ENCODE measurements at regions of chr1 and their contacts with region 1.

Region 1: GRCh38 chr1:244047621-244048471 is 3.2 kb upstream of the ZBTB18 start:
- DNase-seq: peak; percentile 100
- H3K4me3 ChIP-seq: peak overlapping the region; percentile 76 to 90 (median 84)
- H3K27ac ChIP-seq: peak overlapping the region; percentile 95 to 98 (median 96)
- H3K4me1 ChIP-seq: peaks cover 0 to 40% (median 25%) of the 10 kb centered on the region in 4 donors
- H3K27me3 ChIP-seq: no peaks in the 10 kb centered on the region
- CTCF ChIP-seq: no peak
- EP300 ChIP-seq: no peak
- POLR2A ChIP-seq: peak; percentile 96 to 98

Region 2: DNA sequence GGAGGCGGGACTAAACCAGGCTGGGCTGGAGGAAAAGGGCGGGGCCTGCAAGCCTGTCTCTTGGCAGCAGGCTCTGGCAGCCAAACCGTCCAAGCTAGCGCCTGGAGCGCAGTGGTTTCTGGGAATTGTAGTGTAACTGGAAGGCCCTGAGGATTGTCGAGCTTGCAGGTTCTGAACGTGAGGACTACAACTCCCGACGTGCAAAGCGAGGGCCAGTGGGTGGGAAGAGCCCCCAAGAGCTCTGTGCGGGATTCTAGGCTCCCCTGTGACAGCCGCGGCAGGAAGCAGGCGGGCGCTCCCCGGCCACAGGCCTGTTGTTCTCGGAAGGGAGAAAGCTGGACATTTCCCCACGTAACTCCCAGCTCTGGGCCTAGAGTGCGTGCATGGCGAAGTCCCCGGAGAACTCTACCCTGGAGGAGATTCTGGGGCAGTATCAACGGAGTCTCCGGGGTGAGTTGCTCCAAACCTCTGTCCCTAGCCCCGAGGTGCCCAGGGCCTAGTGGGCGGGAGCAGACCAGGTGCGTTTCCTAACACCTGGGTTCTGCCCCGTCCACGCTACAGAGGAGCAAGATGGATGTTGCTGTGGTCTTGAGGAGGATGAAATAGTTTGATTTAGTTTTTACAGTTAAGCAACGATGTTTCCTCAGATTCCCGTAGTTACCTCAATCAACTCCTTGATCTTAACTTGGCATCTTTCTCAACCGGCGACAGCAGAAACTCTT is 791.9 kb before region 1 on chr1 and contains the start of gene SDCCAG8:
- intact Hi-C with region 1: loop called (anchors 5 kb)
- DNase-seq: peak; percentile 100
- H3K4me3 ChIP-seq: peak within 1 kb of the TSS; percentile 52 to 99 (median 94)
- H3K27ac ChIP-seq: peak within 1 kb of the TSS; percentile 92 to 97 (median 96)
- H3K4me1 ChIP-seq: peaks cover 0 to 45% (median 39%) of the 10 kb centered on the region in 4 donors
- H3K27me3 ChIP-seq: no peaks in the 10 kb centered on the region
- CTCF ChIP-seq: no peak
- EP300 ChIP-seq: no peak
- POLR2A ChIP-seq: peak; percentile 65 to 76
- total RNA-seq, gene SDCCAG8: 30.3 to 49.7 (median 40.2) TPM

Region 3: DNA sequence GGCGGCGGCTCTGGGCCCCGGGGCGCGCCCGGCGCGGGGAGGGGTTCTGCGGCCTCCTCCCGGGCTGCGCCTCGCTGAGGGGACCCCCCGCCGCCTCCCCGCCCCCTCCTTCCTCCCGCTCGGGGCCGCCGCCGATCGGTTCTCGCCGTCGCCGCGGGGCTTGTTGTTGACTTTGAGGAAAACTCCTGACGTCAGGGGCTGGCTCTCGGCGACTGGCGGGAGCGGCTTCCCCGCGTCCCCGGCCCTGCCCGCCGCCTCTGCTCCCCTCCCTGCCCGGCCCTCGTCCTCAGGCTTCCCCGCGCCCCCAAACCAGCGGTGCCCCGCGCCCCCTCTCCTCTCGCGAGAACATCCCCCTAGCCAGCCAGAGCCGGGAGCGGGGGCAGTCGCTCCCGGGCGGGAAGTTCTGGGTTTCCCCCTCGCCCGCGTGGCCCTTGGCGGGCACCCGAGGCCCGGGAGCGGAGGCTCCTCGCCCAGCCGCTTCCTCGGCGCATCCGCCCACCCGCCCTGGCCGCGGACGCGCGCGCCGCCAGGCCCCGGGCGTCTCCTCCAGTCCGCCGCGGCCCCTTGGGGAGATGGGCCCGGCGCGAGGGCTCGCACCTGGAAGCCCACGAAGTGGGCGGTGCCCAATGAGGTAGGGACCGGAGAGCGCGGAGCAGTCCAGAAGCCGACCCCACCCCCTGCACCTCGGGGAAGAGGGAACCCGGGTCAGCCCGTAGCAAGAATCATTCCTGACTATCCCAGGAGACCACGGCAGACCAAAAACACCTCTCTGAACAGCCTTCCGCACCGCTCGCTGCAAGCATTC is 197.2 kb before region 1 on chr1:
- intact Hi-C with region 1: loop called (anchors 2 kb)
- DNase-seq: peak; percentile 93
- H3K4me3 ChIP-seq: peak overlapping the region; percentile 95 to 99 (median 97)
- H3K27ac ChIP-seq: peak overlapping the region; percentile 96 to 99 (median 98)
- H3K4me1 ChIP-seq: peaks cover 0 to 27% (median 16%) of the 10 kb centered on the region in 4 donors
- H3K27me3 ChIP-seq: no peaks in the 10 kb centered on the region
- CTCF ChIP-seq: no peak
- EP300 ChIP-seq: no peak
- POLR2A ChIP-seq: no peak

Region 4: GRCh38 chr1:244092293-244092963 is 44.6 kb after region 1 on chr1:
- intact Hi-C with region 1: no loop called
- DNase-seq: no peak
- H3K4me3 ChIP-seq: no peak overlapping the region
- H3K27ac ChIP-seq: no peak overlapping the region
- H3K4me1 ChIP-seq: no peaks in the 10 kb centered on the region
- H3K27me3 ChIP-seq: no peaks in the 10 kb centered on the region
- CTCF ChIP-seq: no peak
- EP300 ChIP-seq: no peak
- POLR2A ChIP-seq: no peak

Region 5: DNA sequence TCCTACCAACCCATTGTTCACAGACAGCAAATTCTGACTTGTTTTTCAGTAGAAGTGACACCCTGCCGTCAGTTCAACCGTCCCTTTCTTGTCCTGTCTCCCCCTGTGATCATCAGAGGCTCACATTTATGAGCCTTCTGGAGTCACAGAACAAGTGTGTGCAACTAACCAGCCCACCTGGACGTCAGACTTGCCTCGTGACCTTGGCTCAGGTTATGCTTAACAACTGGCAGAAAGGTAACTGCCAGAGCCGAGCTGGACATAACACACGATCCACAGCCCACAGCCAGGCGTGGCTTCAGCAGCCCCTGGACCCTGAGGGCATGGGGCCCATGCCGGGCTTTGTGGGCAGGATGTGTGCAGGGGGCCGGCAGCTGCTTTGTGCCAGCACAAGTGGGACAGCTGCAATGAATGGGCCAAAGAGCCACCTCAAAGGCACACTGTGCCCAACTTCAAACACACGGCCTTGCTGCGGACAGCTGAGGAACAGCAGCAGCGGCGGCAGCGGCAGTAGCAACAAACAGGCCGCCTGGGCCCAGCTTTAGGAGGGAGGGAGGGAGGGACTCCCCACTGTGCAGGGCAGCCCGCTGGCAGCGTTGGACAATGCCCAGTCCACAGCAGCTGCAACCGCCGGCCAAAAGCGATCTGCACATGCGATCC is 107.2 kb after region 1 on chr1:
- intact Hi-C with region 1: loop called (anchors 5 kb)
- DNase-seq: peak; percentile 81
- H3K4me3 ChIP-seq: no peak overlapping the region
- H3K27ac ChIP-seq: peak overlapping the region in 3 of 4 donors; percentile 28 to 58 (median 43)
- H3K4me1 ChIP-seq: peaks cover 0 to 16% (median 6%) of the 10 kb centered on the region in 4 donors
- H3K27me3 ChIP-seq: no peaks in the 10 kb centered on the region
- CTCF ChIP-seq: no peak
- EP300 ChIP-seq: peak in 1 of 4 donors; percentile 17
- POLR2A ChIP-seq: no peak

Region 6: DNA sequence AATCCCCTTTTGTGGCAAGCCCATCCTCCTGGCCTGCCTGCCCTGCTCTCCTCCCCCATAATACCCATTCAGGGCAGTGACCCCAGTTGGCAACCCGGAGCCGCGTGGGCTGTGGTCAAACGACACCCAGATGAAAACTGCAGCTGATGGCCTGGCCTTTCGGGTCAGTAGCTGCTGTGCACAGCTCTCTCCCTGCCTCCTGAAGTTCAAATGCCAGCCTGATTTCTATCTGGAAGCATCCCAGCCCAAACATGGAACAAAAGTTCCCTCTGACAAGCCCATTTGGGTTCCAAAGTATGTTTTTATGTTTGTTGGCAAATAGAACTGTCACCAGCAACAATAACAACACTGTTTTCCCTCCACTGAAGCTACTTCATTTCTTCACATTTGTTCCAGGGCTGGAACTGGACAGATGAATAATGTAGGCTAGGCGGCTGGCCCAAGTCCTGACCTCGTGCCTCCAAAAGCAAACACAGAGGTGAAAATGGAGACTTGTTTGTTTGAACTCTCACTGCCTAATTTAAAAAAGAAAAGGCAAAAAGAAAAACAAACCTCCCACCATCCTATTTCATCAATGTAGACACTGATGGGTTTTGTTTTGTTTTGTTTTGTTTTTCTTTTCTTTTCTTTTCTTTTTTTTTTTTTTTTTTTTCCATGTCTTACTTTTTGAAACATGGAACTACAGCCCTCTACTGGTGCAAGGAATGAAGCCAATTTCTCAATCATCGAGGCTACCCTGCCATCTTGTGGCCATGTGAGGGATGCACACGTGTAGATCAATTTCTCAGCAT is 224.8 kb after region 1 on chr1:
- intact Hi-C with region 1: loop called (anchors 1 kb)
- DNase-seq: peak; percentile 84
- H3K4me3 ChIP-seq: no peak overlapping the region
- H3K27ac ChIP-seq: peak overlapping the region; percentile 16 to 82 (median 74)
- H3K4me1 ChIP-seq: peaks cover 0 to 24% (median 16%) of the 10 kb centered on the region in 4 donors
- H3K27me3 ChIP-seq: no peaks in the 10 kb centered on the region
- CTCF ChIP-seq: peak; percentile 83 to 96 (median 94)
- EP300 ChIP-seq: no peak
- POLR2A ChIP-seq: no peak

Region 7: GRCh38 chr1:244652699-244653466 is 605.0 kb after region 1 on chr1 and contains the start of gene DESI2:
- intact Hi-C with region 1: loop called (anchors 10 kb)
- DNase-seq: peak; percentile 100
- H3K4me3 ChIP-seq: peak within 1 kb of the TSS; percentile 78 to 92 (median 86)
- H3K27ac ChIP-seq: peak within 1 kb of the TSS; percentile 83 to 98 (median 97)
- H3K4me1 ChIP-seq: peaks cover 0 to 32% (median 29%) of the 10 kb centered on the region in 4 donors
- H3K27me3 ChIP-seq: no peaks in the 10 kb centered on the region
- CTCF ChIP-seq: peak in 3 of 4 experiments; percentile 14 to 62 (median 42)
- EP300 ChIP-seq: no peak
- POLR2A ChIP-seq: peak; percentile 27 to 66
- total RNA-seq, gene DESI2: 34.2 to 37.3 (median 36.9) TPM

Measured in sigmoid colon (tissue), 7 donors.